CD8-positive, alpha-beta T cell (primary cell): ENCODE measurements at regions of chr19 and their contacts with region 1.

Region 1: DNA sequence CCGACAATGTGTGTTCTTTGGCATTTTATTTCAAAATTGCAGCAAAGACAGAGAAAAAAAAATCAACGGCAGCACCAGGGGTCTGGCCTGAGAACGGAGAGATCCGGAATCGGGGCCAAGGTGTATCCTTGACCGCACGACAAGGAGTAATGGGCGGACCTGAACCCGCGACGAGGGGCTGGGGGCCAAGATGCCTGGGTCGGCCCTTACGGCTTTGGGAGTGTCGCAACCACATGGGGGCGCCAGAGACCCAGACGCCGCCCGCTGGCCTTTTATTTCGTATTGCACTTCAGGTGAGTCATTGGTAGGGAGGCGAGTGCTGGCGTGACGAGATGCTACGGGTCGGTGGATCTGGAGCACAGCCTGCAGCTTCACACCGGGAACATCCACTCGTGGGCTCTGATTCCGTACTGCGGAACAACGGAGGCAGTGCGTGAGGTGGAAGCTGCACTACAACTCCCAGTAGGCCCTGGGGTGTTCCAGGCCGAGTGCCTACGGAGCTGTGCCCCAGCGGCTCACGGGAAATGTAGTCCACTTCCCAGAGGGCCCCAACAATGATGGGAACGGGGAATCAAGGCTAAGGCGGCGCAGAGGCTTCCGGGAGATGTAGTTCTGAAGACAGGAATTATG is 15.7 kb downstream of the BCAT2 start:
- DNase-seq: peak; percentile 61 to 93 (median 83)
- ATAC-seq: peak; percentile 98
- H3K4me3 ChIP-seq: peak overlapping the region; percentile 71 to 78
- H3K4me3 Mint-ChIP-seq: peak overlapping the region; percentile 91
- H3K27ac ChIP-seq: peak overlapping the region; percentile 18 to 73
- H3K27ac Mint-ChIP-seq: peak overlapping the region; percentile 85
- H3K4me1 ChIP-seq: peaks cover 3% of the 10 kb centered on the region
- H3K4me1 Mint-ChIP-seq: peaks cover 6% of the 10 kb centered on the region
- H3K27me3 ChIP-seq: no peaks in the 10 kb centered on the region
- H3K27me3 Mint-ChIP-seq: no peaks in the 10 kb centered on the region
- CTCF ChIP-seq: peak; percentile 98

Region 2: GRCh38 chr19:48720613-48721296 is 74.4 kb before region 1 on chr19:
- CTCF ChIA-PET with region 1: interaction called, 3 read pairs
- POLR2A ChIA-PET with region 1: no interaction called
- intact Hi-C with region 1: loop called (anchors 1 kb)
- DNase-seq: peak; percentile 81 to 96 (median 90)
- ATAC-seq: peak; percentile 80
- H3K4me3 ChIP-seq: peak overlapping the region; percentile 65 to 69
- H3K4me3 Mint-ChIP-seq: peak overlapping the region; percentile 96
- H3K27ac ChIP-seq: peak overlapping the region; percentile 52 to 88
- H3K27ac Mint-ChIP-seq: peak overlapping the region; percentile 96
- H3K4me1 ChIP-seq: peaks cover 16% of the 10 kb centered on the region
- H3K4me1 Mint-ChIP-seq: peaks cover 24% of the 10 kb centered on the region
- H3K27me3 ChIP-seq: no peaks in the 10 kb centered on the region
- H3K27me3 Mint-ChIP-seq: no peaks in the 10 kb centered on the region
- CTCF ChIP-seq: no peak

Region 3: GRCh38 chr19:48752498-48753365 is 42.4 kb before region 1 on chr19 and contains the start of gene FUT1:
- CTCF ChIA-PET with region 1: no interaction called
- POLR2A ChIA-PET with region 1: no interaction called
- intact Hi-C with region 1: no loop called
- DNase-seq: peak in 7 of 9 experiments; percentile 14 to 57 (median 48)
- ATAC-seq: peak; percentile 85
- H3K4me3 ChIP-seq: peak within 1 kb of the TSS; percentile 29 to 39
- H3K4me3 Mint-ChIP-seq: peak within 1 kb of the TSS; percentile 79
- H3K27ac ChIP-seq: no peak within 1 kb of the TSS
- H3K27ac Mint-ChIP-seq: no peak within 1 kb of the TSS
- H3K4me1 ChIP-seq: peaks cover 14% of the 10 kb centered on the region
- H3K4me1 Mint-ChIP-seq: peaks cover 19% of the 10 kb centered on the region
- H3K27me3 ChIP-seq: peaks cover 7 to 11% of the 10 kb centered on the region in 2 experiments
- H3K27me3 Mint-ChIP-seq: peaks cover 26% of the 10 kb centered on the region
- CTCF ChIP-seq: peak; percentile 19
- total RNA-seq, gene FUT1: not detected

Region 4: DNA sequence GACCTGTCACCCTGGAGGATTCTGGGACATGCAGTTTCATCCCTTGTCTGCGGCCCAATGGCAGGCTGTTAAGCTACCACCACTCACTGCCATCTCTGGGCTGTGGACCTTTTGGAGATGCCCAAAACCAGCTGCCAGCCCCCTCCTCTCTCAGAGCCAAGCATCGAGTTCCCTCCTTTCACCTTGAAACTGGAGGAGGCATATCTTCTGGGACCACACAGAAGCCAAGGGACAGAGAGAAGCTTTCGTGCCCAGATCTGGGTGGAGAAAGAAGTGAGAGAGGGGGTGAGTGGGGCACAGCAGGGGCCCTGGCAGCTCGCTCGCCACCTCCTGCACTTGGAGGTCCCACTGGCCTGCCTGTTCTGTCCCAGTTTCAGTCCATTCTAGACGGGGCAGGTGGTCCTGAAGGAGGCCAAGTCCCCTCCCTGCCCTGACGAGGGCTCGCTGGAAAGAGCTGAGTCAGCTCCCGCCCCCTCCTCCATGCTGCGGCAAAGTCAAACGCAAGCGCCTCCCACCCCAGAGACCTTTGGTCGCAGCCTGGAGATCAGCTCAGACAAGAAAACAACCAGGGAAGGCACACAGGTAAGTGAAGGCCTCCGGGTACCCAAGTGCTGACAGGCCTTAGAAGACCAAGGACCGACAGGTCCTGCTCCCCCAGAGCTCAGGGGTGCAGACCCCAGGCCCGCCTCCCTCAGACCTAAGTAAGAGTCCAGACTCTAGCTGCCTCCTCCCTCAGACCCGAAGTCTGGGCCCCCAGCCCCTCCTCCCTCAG is 11.8 kb after region 1 on chr19:
- CTCF ChIA-PET with region 1: interaction called, 15 read pairs
- POLR2A ChIA-PET with region 1: interaction called, 9 read pairs
- intact Hi-C with region 1: loop called in 1 of 2 experiments (anchors 1 kb)
- DNase-seq: no peak
- ATAC-seq: no peak
- H3K4me3 ChIP-seq: no peak overlapping the region
- H3K4me3 Mint-ChIP-seq: no peak overlapping the region
- H3K27ac ChIP-seq: no peak overlapping the region
- H3K27ac Mint-ChIP-seq: no peak overlapping the region
- H3K4me1 ChIP-seq: peaks cover 11% of the 10 kb centered on the region
- H3K4me1 Mint-ChIP-seq: peaks cover 19% of the 10 kb centered on the region
- H3K27me3 ChIP-seq: no peaks in the 10 kb centered on the region
- H3K27me3 Mint-ChIP-seq: no peaks in the 10 kb centered on the region
- CTCF ChIP-seq: no peak

Region 5: DNA sequence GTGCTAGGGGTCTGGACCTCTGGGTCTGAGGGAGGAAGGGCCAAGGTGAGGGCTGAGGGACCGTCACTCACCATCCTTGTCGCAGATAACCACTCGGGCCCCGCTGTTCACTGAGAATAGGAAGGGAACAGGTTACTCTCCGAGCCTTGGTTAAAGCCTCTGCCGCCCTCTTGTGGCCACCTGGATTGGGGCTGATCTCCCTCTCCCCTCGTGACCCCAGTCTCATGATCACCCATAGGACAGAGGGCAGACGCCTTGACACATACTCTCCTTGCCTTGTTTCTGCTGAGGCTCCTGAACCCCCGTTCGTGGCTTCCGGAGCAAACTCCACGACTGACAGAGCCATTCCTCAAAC is 40.5 kb after region 1 on chr19:
- CTCF ChIA-PET with region 1: interaction called, 403 read pairs
- POLR2A ChIA-PET with region 1: interaction called, 12 read pairs
- intact Hi-C with region 1: loop called (anchors 1 kb)
- DNase-seq: peak; percentile 87 to 96 (median 92)
- ATAC-seq: peak; percentile 86
- H3K4me3 ChIP-seq: peak overlapping the region; percentile 42 to 51
- H3K4me3 Mint-ChIP-seq: peak overlapping the region; percentile 83
- H3K27ac ChIP-seq: no peak overlapping the region
- H3K27ac Mint-ChIP-seq: peak overlapping the region; percentile 50
- H3K4me1 ChIP-seq: peaks cover 22% of the 10 kb centered on the region
- H3K4me1 Mint-ChIP-seq: peaks cover 20% of the 10 kb centered on the region
- H3K27me3 ChIP-seq: peaks cover 0 to 5% of the 10 kb centered on the region in 2 experiments
- H3K27me3 Mint-ChIP-seq: peaks cover 5% of the 10 kb centered on the region
- CTCF ChIP-seq: peak; percentile 66

Region 6: GRCh38 chr19:48858984-48859710 is 64.0 kb after region 1 on chr19:
- CTCF ChIA-PET with region 1: interaction called, 403 read pairs
- POLR2A ChIA-PET with region 1: no interaction called
- intact Hi-C with region 1: loop called in 1 of 2 experiments (anchors 1 kb)
- DNase-seq: peak in 8 of 9 experiments; percentile 74 to 84 (median 82)
- ATAC-seq: peak; percentile 76
- H3K4me3 ChIP-seq: peak overlapping the region; percentile 49 to 55
- H3K4me3 Mint-ChIP-seq: peak overlapping the region; percentile 88
- H3K27ac ChIP-seq: no peak overlapping the region
- H3K27ac Mint-ChIP-seq: peak overlapping the region; percentile 87
- H3K4me1 ChIP-seq: no peaks in the 10 kb centered on the region
- H3K4me1 Mint-ChIP-seq: peaks cover 3% of the 10 kb centered on the region
- H3K27me3 ChIP-seq: no peaks in the 10 kb centered on the region
- H3K27me3 Mint-ChIP-seq: no peaks in the 10 kb centered on the region
- CTCF ChIP-seq: no peak

Region 7: GRCh38 chr19:48899781-48900476 is 104.8 kb after region 1 on chr19 and contains the start of gene NUCB1:
- CTCF ChIA-PET with region 1: interaction called, 9 read pairs
- POLR2A ChIA-PET with region 1: no interaction called
- intact Hi-C with region 1: loop called in 1 of 2 experiments (anchors 1 kb)
- DNase-seq: peak; percentile 96 to 99 (median 98)
- ATAC-seq: peak; percentile 95
- H3K4me3 ChIP-seq: peak within 1 kb of the TSS; percentile 85 to 98
- H3K4me3 Mint-ChIP-seq: peak within 1 kb of the TSS; percentile 94
- H3K27ac ChIP-seq: peak within 1 kb of the TSS; percentile 77 to 78
- H3K27ac Mint-ChIP-seq: peak within 1 kb of the TSS; percentile 95
- H3K4me1 ChIP-seq: peaks cover 29% of the 10 kb centered on the region
- H3K4me1 Mint-ChIP-seq: peaks cover 30% of the 10 kb centered on the region
- H3K27me3 ChIP-seq: no peaks in the 10 kb centered on the region
- H3K27me3 Mint-ChIP-seq: peaks cover 2% of the 10 kb centered on the region
- CTCF ChIP-seq: no peak
- total RNA-seq, gene NUCB1: 55.4 to 66.7 TPM

Region 8: DNA sequence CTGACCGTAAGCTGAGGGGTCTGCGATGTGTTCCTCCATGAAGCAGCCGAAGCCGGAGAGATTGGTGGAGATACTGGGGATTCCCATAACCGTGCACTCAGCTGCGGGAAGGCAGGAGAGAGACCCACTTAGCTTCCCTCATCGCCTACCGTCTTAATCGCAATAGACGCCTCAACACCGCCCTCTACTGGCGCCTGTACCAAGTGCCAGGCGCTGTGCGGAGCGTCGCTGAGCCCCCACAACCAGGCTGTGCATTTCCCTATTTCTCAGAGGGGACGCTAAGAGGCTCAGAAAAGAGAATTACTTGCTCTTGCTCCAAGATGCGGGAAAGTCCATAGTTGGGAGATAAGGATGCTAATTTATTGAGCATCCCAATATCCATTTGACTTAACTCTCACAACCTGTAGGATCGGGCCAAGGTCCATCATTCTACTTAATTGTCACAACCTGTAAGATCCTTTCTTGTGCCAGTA is 175.8 kb after region 1 on chr19:
- CTCF ChIA-PET with region 1: interaction called, 28 read pairs
- POLR2A ChIA-PET with region 1: interaction called, 3 read pairs
- intact Hi-C with region 1: loop called (anchors 1 kb)
- DNase-seq: peak; percentile 67 to 91 (median 86)
- ATAC-seq: peak; percentile 91
- H3K4me3 ChIP-seq: no peak overlapping the region
- H3K4me3 Mint-ChIP-seq: no peak overlapping the region
- H3K27ac ChIP-seq: no peak overlapping the region
- H3K27ac Mint-ChIP-seq: no peak overlapping the region
- H3K4me1 ChIP-seq: peaks cover 10% of the 10 kb centered on the region
- H3K4me1 Mint-ChIP-seq: peaks cover 19% of the 10 kb centered on the region
- H3K27me3 ChIP-seq: no peaks in the 10 kb centered on the region
- H3K27me3 Mint-ChIP-seq: no peaks in the 10 kb centered on the region
- CTCF ChIP-seq: peak; percentile 84

Region 9: GRCh38 chr19:50242581-50242980 is 1447.4 kb after region 1 on chr19:
- CTCF ChIA-PET with region 1: no interaction called
- POLR2A ChIA-PET with region 1: no interaction called
- intact Hi-C with region 1: no loop called
- DNase-seq: no peak
- ATAC-seq: no peak
- H3K4me3 ChIP-seq: no peak overlapping the region
- H3K4me3 Mint-ChIP-seq: no peak overlapping the region
- H3K27ac ChIP-seq: no peak overlapping the region
- H3K27ac Mint-ChIP-seq: no peak overlapping the region
- H3K4me1 ChIP-seq: no peaks in the 10 kb centered on the region
- H3K4me1 Mint-ChIP-seq: no peaks in the 10 kb centered on the region
- H3K27me3 ChIP-seq: no peaks in the 10 kb centered on the region
- H3K27me3 Mint-ChIP-seq: peaks cover 13% of the 10 kb centered on the region
- CTCF ChIP-seq: no peak